Ovary (tissue), 10 donors: ENCODE measurements at regions of chr10 and their contacts with region 1.

Region 1: DNA sequence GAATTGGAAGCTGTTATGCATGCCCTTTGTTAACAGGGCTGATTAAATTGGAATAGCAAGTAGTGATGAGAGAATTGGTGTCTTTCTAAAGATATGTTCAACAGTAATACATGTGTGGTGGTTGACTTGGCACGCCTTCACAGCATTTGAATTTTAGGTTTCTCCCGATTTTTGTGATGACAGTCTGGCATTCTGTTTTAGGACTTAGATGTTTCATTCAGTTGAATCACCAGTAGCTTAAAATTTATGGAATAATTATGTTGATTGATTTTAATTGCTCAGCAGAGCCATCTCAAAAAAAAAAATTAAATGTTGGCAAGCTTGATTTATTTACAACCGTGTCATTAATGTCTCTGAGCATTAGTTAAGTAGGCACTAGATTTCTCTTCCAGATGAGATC is 219.7 kb downstream of the CSTF2T start:
- DNase-seq: no peak
- H3K4me3 ChIP-seq: no peak overlapping the region
- H3K27ac ChIP-seq: no peak overlapping the region
- H3K4me1 ChIP-seq: no peaks in the 10 kb centered on the region
- H3K27me3 ChIP-seq: no peaks in the 10 kb centered on the region
- CTCF ChIP-seq: no peak
- EP300 ChIP-seq: no peak
- POLR2A ChIP-seq: no peak

Region 2: DNA sequence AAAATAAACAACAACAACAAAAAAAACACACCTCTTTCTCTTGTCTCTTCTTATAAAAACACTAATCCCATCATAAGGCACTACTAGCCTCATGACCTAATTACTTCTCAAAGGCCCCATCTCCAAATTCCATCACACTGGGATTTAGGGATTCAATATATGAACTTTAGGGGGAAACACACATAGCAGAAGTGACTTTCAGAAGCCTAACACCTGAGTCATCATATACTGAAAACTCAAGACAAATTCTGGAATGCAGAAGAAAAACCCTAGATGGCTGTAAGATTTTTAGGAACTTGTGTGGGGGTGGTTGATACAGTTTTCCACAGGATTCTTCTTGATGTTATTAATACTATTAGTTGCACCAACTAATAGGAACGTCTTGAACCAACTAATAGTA is 253.3 kb after region 1 on chr10:
- intact Hi-C with region 1: no loop called
- DNase-seq: no peak
- H3K4me3 ChIP-seq: no peak overlapping the region
- H3K27ac ChIP-seq: no peak overlapping the region
- H3K4me1 ChIP-seq: no peaks in the 10 kb centered on the region
- H3K27me3 ChIP-seq: no peaks in the 10 kb centered on the region
- CTCF ChIP-seq: no peak
- EP300 ChIP-seq: no peak
- POLR2A ChIP-seq: no peak

Region 3: DNA sequence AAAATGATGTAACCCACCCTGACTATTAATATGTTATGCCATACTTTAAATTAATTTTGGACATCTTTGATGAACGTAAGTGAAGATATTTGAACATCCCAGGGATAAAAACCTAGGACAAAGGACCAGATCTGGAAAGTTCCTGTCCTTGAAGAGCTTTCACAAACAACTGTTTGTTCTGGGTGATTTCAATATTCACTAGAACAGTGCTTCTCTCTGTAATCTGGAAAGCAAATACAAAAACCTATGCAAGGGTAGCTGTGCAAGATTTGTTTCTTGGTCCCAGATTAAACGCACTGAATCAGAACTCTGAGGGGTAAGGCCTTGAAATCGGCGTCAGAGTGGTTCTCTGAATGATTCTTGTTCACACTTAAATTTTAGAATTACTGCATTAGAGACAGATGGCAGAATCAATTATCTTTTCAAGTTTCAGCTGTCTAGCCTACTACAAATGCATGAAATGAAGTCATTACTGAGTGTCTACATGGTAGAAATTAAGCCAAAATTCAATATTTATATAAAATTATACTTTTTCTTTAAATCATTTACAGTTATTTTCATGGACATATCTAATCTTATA is 289.3 kb after region 1 on chr10:
- intact Hi-C with region 1: loop called in 1 of 4 experiments (anchors 5 kb)
- DNase-seq: no peak
- H3K4me3 ChIP-seq: no peak overlapping the region
- H3K27ac ChIP-seq: no peak overlapping the region
- H3K4me1 ChIP-seq: no peaks in the 10 kb centered on the region
- H3K27me3 ChIP-seq: no peaks in the 10 kb centered on the region
- CTCF ChIP-seq: no peak
- EP300 ChIP-seq: no peak
- POLR2A ChIP-seq: no peak